ENCODE measurements at regions of chr9 and their contacts with region 1.

Region 1: GRCh38 chr9:120985810-120986222 is 59.2 kb upstream of the TRAF1 start:
- DNase-seq: peak in 7 of 42 donors; percentile 8 to 61 (median 38)

Region 2: GRCh38 chr9:120755827-120756434 is 229.9 kb before region 1 on chr9:
- intact Hi-C with region 1: no loop called
- DNase-seq: peak in 37 of 42 donors; percentile 28 to 89 (median 69)

Region 3: GRCh38 chr9:121059998-121060636 is 74.3 kb after region 1 on chr9:
- intact Hi-C with region 1: loop called (anchors 10 kb)
- DNase-seq: peak in 22 of 42 donors; percentile 17 to 78 (median 44)

Measured in head of caudate nucleus (tissue), 42 donors.